CD8-positive, alpha-beta memory T cell (primary cell): ENCODE measurements at regions of chr19 and their contacts with region 1.

Region 1: GRCh38 chr19:41872775-41873647 is 4.1 kb upstream of the CD79A start:
- DNase-seq: peak; percentile 49 to 79 (median 57)
- H3K4me3 ChIP-seq: no peak overlapping the region
- H3K4me3 Mint-ChIP-seq: peak overlapping the region; percentile 35 to 81 (median 64)
- H3K27ac ChIP-seq: no peak overlapping the region
- H3K27ac Mint-ChIP-seq: peak overlapping the region; percentile 80 to 99 (median 98)
- H3K4me1 ChIP-seq: peaks cover 100% of the 10 kb centered on the region
- H3K4me1 Mint-ChIP-seq: peaks cover 68 to 91% (median 79%) of the 10 kb centered on the region in 3 donors
- H3K27me3 ChIP-seq: no peaks in the 10 kb centered on the region
- H3K27me3 Mint-ChIP-seq: no peaks in the 10 kb centered on the region

Region 2: GRCh38 chr19:41785653-41786052 is 87.4 kb before region 1 on chr19:
- CTCF ChIA-PET with region 1: no interaction called
- POLR2A ChIA-PET with region 1: no interaction called
- DNase-seq: peak; percentile 46 to 77 (median 65)
- H3K4me3 ChIP-seq: no peak overlapping the region
- H3K4me3 Mint-ChIP-seq: peak overlapping the region in 5 of 7 donors; percentile 4 to 53 (median 52)
- H3K27ac ChIP-seq: no peak overlapping the region
- H3K27ac Mint-ChIP-seq: peak overlapping the region in 2 of 8 donors; percentile 8 to 40
- H3K4me1 ChIP-seq: peaks cover 11% of the 10 kb centered on the region
- H3K4me1 Mint-ChIP-seq: peaks cover 14 to 17% (median 17%) of the 10 kb centered on the region in 3 donors
- H3K27me3 ChIP-seq: peaks cover 8% of the 10 kb centered on the region
- H3K27me3 Mint-ChIP-seq: peaks cover 31 to 53% of the 10 kb centered on the region in 2 donors

Region 3: DNA sequence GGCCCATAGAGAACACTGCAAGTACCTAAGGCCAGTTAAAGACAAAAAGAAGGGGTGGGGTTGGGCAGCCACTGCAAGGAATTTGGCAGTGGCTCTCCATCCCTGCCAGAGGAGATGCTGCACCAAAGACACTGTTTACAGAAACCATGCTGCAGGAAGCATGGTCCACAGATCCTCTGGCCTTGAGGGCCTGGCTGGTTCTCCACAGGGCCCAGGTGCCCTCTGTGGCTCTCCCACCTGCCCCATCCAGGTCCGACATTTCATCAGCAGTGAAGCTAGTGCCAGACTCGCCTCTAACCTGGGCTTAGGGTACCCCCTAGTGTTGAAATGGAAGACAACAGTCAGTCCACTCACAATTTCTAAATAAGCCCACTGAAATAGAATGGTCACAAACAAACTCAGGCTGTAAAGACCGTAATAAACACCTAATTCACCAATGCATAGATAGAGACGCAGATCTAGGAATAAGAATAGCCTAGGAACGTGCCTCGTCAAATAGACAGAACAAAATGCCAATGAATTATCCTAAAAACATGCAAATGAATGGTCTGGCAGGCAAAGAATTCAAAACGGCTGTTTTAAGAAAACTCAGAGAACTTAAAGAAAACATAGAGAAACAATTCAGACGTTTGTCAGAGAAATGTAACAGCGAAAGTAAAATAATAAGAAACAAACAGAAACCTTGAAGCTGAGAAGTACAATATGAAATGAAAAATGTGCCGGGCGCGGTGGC is 51.8 kb before region 1 on chr19:
- CTCF ChIA-PET with region 1: no interaction called
- POLR2A ChIA-PET with region 1: no interaction called
- DNase-seq: peak in 3 of 5 donors; percentile 15 to 56 (median 27)
- H3K4me3 ChIP-seq: no peak overlapping the region
- H3K4me3 Mint-ChIP-seq: no peak overlapping the region
- H3K27ac ChIP-seq: no peak overlapping the region
- H3K27ac Mint-ChIP-seq: peak overlapping the region in 1 of 8 donors; percentile 84
- H3K4me1 ChIP-seq: no peaks in the 10 kb centered on the region
- H3K4me1 Mint-ChIP-seq: peaks cover 0 to 2% (median 0%) of the 10 kb centered on the region in 3 donors
- H3K27me3 ChIP-seq: no peaks in the 10 kb centered on the region
- H3K27me3 Mint-ChIP-seq: peaks cover 12 to 28% of the 10 kb centered on the region in 2 donors

Region 4: DNA sequence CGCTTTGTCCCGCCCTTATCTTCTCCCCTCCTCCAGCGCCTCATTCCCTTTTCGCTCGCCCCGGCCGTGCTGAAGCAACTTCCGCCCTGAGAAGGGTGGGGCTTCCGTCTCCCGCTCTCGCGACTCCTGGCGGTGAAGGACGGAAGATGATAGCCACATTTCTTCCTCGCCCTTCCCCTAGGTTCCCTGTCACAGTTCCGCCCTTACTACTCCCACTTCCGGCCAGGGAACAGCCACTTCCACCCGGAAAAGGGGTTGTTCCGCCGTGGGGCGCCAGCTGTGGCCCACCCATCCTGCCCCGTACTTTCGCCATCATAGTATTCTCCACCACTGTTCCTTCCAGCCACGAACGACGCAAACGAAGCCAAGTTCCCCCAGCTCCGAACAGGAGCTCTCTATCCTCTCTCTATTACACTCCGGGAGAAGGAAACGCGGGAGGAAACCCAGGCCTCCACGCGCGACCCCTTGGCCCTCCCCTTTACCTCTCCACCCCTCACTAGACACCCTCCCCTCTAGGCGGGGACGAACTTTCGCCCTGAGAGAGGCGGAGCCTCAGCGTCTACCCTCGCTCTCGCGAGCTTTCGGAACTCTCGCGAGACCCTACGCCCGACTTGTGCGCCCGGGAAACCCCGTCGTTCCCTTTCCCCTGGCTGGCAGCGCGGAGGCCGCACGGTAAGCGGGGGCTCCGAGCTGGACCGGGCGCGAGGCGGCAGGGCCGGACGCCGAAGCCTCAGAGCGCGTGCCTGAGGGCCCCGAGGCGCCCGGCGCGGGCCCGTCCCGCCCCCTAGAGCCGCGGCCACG is 13.2 kb before region 1 on chr19 and contains the start of gene RPS19:
- CTCF ChIA-PET with region 1: interaction called, 49 read pairs
- POLR2A ChIA-PET with region 1: interaction called, 72 read pairs
- DNase-seq: peak; percentile 96 to 99 (median 98)
- H3K4me3 ChIP-seq: peak within 1 kb of the TSS; percentile 79
- H3K4me3 Mint-ChIP-seq: peak within 1 kb of the TSS; percentile 88 to 99 (median 92)
- H3K27ac ChIP-seq: peak within 1 kb of the TSS; percentile 93
- H3K27ac Mint-ChIP-seq: peak within 1 kb of the TSS; percentile 86 to 100 (median 96)
- H3K4me1 ChIP-seq: peaks cover 48% of the 10 kb centered on the region
- H3K4me1 Mint-ChIP-seq: peaks cover 43 to 50% (median 46%) of the 10 kb centered on the region in 3 donors
- H3K27me3 ChIP-seq: no peaks in the 10 kb centered on the region
- H3K27me3 Mint-ChIP-seq: peaks cover 0 to 4% of the 10 kb centered on the region in 2 donors
- total RNA-seq, gene RPS19: 3,036 to 3,142 TPM

Region 5: DNA sequence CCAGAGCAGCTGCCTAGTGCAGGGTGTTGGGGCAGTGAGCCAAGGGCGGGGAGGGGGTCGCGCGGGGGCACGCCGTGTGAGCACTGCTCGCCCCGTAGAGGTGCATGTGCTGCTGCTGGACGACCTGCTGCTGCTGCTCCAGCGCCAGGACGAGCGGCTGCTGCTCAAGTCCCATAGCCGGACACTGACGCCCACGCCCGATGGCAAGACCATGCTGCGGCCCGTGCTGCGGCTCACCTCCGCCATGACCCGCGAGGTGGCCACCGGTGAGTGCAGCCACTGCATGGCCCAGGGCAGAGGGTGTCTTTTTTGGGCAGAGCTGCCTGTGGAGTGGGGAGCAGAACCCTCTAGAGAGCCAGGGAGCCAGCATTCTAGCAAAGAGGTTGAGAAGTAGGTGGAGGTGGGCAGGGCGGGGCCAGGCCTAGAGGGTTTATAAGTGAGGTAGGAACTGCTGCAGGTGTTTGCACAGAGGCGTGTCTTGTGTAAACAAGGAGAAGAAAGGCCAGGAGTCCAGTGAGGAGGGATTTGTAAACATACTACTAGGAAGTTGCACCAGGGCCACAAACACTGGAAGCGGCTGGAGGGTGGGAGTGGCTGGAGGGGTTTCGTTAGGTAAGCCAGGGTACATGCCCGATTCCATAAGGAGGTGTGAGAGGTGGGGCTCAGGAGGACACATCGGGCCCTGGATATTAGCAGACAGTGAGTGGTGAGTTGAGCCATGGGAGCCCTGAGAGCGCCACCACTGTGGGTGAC is 31.3 kb after region 1 on chr19:
- CTCF ChIA-PET with region 1: interaction called, 14 read pairs
- POLR2A ChIA-PET with region 1: interaction called, 8 read pairs
- DNase-seq: no peak
- H3K4me3 ChIP-seq: no peak overlapping the region
- H3K4me3 Mint-ChIP-seq: peak overlapping the region in 1 of 7 donors; percentile 26
- H3K27ac ChIP-seq: no peak overlapping the region
- H3K27ac Mint-ChIP-seq: peak overlapping the region in 3 of 8 donors; percentile 33 to 83 (median 64)
- H3K4me1 ChIP-seq: peaks cover 16% of the 10 kb centered on the region
- H3K4me1 Mint-ChIP-seq: peaks cover 27 to 67% (median 41%) of the 10 kb centered on the region in 3 donors
- H3K27me3 ChIP-seq: no peaks in the 10 kb centered on the region
- H3K27me3 Mint-ChIP-seq: peaks cover 0 to 2% of the 10 kb centered on the region in 2 donors

Region 6: GRCh38 chr19:41928221-41928683 is 55.2 kb after region 1 on chr19 and contains the start of gene ERFL:
- CTCF ChIA-PET with region 1: interaction called, 30 read pairs
- POLR2A ChIA-PET with region 1: no interaction called
- DNase-seq: peak in 1 of 5 donors; percentile 50
- H3K4me3 ChIP-seq: peak within 1 kb of the TSS; percentile 75
- H3K4me3 Mint-ChIP-seq: peak within 1 kb of the TSS; percentile 86 to 94 (median 88)
- H3K27ac ChIP-seq: peak within 1 kb of the TSS; percentile 53
- H3K27ac Mint-ChIP-seq: peak within 1 kb of the TSS; percentile 66 to 92 (median 86)
- H3K4me1 ChIP-seq: peaks cover 29% of the 10 kb centered on the region
- H3K4me1 Mint-ChIP-seq: peaks cover 24 to 30% (median 28%) of the 10 kb centered on the region in 3 donors
- H3K27me3 ChIP-seq: no peaks in the 10 kb centered on the region
- H3K27me3 Mint-ChIP-seq: peaks cover 2 to 4% of the 10 kb centered on the region in 2 donors
- total RNA-seq, gene ERFL: 1.3 to 1.4 TPM

Region 7: DNA sequence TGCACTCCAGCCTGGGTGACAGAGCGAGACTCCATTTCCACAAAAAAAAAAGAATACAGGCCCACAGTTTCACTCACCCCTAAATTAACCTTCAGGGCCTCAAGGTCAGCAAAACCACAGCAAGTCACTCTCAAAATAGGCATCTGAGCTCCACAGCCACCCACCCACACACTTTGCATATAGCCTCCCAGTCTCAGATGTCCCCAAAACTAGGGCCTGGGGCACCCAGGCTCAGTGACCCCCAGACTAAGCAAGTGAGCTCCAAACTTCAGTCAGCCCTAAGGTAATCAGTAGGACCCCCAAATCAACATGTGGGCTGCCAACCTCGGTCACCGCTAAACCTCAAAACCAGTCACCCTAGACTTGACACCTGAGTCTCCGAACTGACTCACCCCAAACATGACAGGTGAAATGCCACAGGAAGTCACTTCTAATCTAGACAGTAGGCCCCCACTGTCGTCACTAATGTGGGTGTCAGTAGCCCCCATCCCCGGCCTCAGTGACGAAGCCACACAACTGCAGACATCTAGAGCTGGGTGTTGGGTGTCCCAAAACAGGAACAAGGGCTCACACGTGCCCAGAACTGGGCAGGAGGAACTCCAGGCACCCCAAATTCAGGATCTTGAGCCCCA is 72.2 kb after region 1 on chr19:
- CTCF ChIA-PET with region 1: interaction called, 57 read pairs
- POLR2A ChIA-PET with region 1: interaction called, 19 read pairs
- DNase-seq: peak; percentile 84 to 97 (median 95)
- H3K4me3 ChIP-seq: no peak overlapping the region
- H3K4me3 Mint-ChIP-seq: peak overlapping the region; percentile 53 to 91 (median 74)
- H3K27ac ChIP-seq: peak overlapping the region; percentile 28
- H3K27ac Mint-ChIP-seq: peak overlapping the region; percentile 95 to 100 (median 99)
- H3K4me1 ChIP-seq: peaks cover 39% of the 10 kb centered on the region
- H3K4me1 Mint-ChIP-seq: peaks cover 45 to 77% (median 55%) of the 10 kb centered on the region in 3 donors
- H3K27me3 ChIP-seq: no peaks in the 10 kb centered on the region
- H3K27me3 Mint-ChIP-seq: peaks cover 7 to 9% of the 10 kb centered on the region in 2 donors

Region 8: GRCh38 chr19:41959056-41960053 is 86.3 kb after region 1 on chr19 and contains the start of gene RABAC1:
- CTCF ChIA-PET with region 1: interaction called, 19 read pairs
- POLR2A ChIA-PET with region 1: interaction called, 4 read pairs
- DNase-seq: peak; percentile 79 to 90 (median 82)
- H3K4me3 ChIP-seq: peak within 1 kb of the TSS; percentile 92
- H3K4me3 Mint-ChIP-seq: peak within 1 kb of the TSS; percentile 92 to 96 (median 94)
- H3K27ac ChIP-seq: peak within 1 kb of the TSS; percentile 86
- H3K27ac Mint-ChIP-seq: peak within 1 kb of the TSS; percentile 82 to 98 (median 94)
- H3K4me1 ChIP-seq: peaks cover 16% of the 10 kb centered on the region
- H3K4me1 Mint-ChIP-seq: peaks cover 17 to 22% (median 21%) of the 10 kb centered on the region in 3 donors
- H3K27me3 ChIP-seq: no peaks in the 10 kb centered on the region
- H3K27me3 Mint-ChIP-seq: no peaks in the 10 kb centered on the region
- total RNA-seq, gene RABAC1: 74.7 to 83.3 TPM